Left colon (tissue), 2 donors: ENCODE measurements at regions of chr10 and their contacts with region 1.

Region 1: GRCh38 chr10:4767033-4767814 is 58.8 kb upstream of the AKR1E2 start:
- DNase-seq: peak in 1 of 2 donors; percentile 6
- ATAC-seq: peak; percentile 66

Region 2: GRCh38 chr10:3197348-3198003 is 1569.7 kb before region 1 on chr10:
- intact Hi-C with region 1: loop called in 1 of 2 experiments (anchors 10 kb)
- DNase-seq: peak; percentile 64 to 80
- ATAC-seq: peak; percentile 92

Region 3: GRCh38 chr10:3239066-3239919 is 1527.9 kb before region 1 on chr10:
- intact Hi-C with region 1: loop called in 1 of 2 experiments (anchors 10 kb)
- DNase-seq: peak; percentile 47 to 81
- ATAC-seq: peak; percentile 93

Region 4: GRCh38 chr10:3785257-3785850 is 981.9 kb before region 1 on chr10:
- intact Hi-C with region 1: loop called in 1 of 2 experiments (anchors 10 kb)
- DNase-seq: peak; percentile 98 to 99
- ATAC-seq: peak; percentile 67

Region 5: GRCh38 chr10:4541292-4541691 is 225.9 kb before region 1 on chr10:
- intact Hi-C with region 1: no loop called
- DNase-seq: peak; percentile 6 to 30
- ATAC-seq: peak; percentile 99

Region 6: GRCh38 chr10:4981722-4982471 is 214.7 kb after region 1 on chr10:
- intact Hi-C with region 1: no loop called
- DNase-seq: peak; percentile 13 to 67
- ATAC-seq: peak; percentile 88